Activated CD4-positive, alpha-beta memory T cell treated with anti-CD3 and anti-CD28 coated beads, Interleukin-2, amount 10 ng/mL, durations not matched to agents 7 days and 5 days (primary cell): ENCODE measurements at regions of chr10 and their contacts with region 1.

Region 1: DNA sequence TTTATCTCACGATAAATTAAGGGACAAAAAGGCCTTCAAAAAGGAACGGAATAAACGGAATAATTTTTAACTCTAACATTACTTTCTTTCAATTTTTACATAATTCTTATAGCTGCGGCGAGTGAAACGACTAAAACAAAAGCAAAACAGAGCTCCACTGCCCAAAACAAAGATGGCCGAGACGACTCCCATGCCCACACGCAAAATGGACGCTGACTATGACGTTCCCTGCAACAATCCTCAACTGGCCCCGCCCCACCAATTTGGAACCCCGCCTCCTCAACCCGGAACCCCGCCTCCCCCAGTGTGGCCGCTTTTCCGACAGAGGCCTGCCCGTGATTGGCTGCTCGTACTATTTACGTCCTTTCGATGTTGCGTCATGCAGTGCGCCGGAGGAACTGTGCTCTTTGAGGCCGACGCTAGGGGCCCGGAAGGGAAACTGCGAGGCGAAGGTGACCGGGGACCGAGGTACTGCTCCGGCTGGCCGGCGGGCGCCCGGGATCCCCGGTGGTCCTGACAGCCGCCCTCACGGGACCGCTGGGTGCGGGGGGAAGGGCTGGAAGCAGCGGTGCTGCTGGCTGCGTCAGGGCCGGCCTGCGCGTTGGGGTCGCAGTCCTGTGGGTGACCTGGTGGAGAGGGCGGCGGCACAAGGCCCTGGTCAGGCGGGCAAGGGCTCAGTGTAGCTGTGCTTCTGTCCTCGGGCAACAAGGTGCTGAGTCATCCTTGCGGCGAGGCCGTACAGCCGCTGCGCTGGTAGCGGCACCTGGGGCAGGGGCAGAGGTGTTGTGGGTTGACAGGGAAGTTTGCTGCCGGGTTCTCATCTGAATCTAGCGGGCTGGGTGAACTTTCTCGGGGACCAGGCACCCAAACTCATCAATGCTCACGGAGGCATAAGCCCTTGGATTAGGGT is at the start of gene GHITM:
- DNase-seq: peak; percentile 100
- H3K4me3 Mint-ChIP-seq: peak within 1 kb of the TSS; percentile 85
- H3K27ac Mint-ChIP-seq: peak within 1 kb of the TSS; percentile 94
- H3K4me1 Mint-ChIP-seq: peaks cover 27% of the 10 kb centered on the region
- H3K27me3 Mint-ChIP-seq: no peaks in the 10 kb centered on the region
- total RNA-seq, gene GHITM: 120 to 124 TPM

Region 2: GRCh38 chr10:84156768-84157167 is 17.4 kb after region 1 on chr10:
- CTCF ChIA-PET with region 1: no interaction called
- POLR2A ChIA-PET with region 1: interaction called, 11 read pairs
- DNase-seq: no peak
- H3K4me3 Mint-ChIP-seq: no peak overlapping the region
- H3K27ac Mint-ChIP-seq: no peak overlapping the region
- H3K4me1 Mint-ChIP-seq: peaks cover 11% of the 10 kb centered on the region
- H3K27me3 Mint-ChIP-seq: peaks cover 9% of the 10 kb centered on the region

Region 3: DNA sequence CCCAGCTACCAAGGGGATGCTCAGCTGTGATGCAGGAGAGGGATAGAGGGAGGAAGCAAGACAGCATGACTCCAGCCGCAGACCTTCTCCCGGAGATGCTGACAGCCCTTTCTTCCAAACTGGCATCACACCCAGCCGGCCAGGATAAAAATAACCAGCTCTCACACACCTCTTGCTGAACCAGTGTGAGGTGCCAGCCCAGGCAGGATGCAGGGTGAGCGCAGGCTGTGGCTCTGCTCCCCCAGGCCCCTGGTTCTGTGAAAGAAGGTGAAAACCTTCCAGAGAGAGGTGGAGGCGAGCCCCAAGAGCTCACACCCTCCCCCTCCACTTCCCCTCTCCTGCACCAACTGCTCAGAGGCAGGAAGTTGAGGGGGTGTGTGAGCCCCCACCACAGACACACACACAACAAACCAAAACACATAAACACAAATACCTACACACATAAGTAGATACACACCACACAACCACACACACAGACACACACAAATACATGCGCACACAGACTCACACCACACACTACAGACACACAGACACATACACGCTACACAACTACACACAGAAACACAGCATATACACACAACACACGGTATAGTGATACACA is 38.3 kb after region 1 on chr10:
- CTCF ChIA-PET with region 1: no interaction called
- POLR2A ChIA-PET with region 1: interaction called, 12 read pairs
- DNase-seq: peak; percentile 76
- H3K4me3 Mint-ChIP-seq: no peak overlapping the region
- H3K27ac Mint-ChIP-seq: no peak overlapping the region
- H3K4me1 Mint-ChIP-seq: no peaks in the 10 kb centered on the region
- H3K27me3 Mint-ChIP-seq: no peaks in the 10 kb centered on the region